Right ventricle myocardium superior (tissue), 1 donor: ENCODE measurements at regions of chr4 and their contacts with region 1.

Region 1: GRCh38 chr4:67545199-67546003 is at the start of gene CENPC:
- DNase-seq: peak; percentile 99
- ATAC-seq: peak; percentile 100
- total RNA-seq, gene CENPC: 6.9 TPM

Region 2: GRCh38 chr4:67437974-67438713 is 107.3 kb before region 1 on chr4:
- intact Hi-C with region 1: no loop called
- DNase-seq: no peak
- ATAC-seq: peak; percentile 85

Region 3: DNA sequence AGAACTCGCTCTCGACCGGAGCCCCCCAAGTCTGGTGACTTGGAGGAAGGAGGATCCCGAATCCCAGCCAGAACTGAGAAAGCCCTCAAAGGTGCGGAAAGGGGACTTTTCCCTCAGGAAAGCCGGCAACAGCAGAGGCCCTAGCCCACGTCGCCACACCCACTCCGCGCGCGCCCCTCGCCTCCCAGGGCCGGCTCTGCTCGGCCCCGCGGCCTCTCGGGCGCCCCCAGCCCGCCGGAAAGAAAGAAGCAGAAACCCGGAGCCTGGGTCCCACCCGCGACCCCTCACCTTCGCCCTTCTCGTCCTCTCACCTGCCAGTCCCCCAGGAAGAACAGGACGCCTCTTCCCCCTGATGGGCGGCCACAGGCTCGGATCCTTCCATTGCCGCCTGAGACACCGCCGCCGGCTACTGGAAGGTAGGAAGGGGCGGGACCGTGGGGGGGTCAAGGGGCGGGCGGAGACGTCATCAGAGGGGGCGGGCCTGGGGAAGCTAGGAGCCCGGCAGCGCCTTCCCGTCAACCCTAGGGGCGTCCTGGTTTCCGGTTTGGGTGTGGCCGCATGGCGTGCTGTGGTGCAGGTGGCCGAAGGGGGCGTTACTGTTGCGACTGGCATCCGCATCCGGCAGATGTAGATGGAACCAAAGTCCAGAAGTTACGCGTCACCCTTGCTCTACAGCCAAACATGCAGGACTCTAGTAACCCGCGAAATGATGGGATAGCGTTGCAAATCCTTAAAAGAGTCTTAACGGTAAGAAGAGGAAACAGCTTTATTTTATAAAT is 155.5 kb after region 1 on chr4 and contains the start of gene UBA6:
- intact Hi-C with region 1: loop called (anchors 10 kb)
- DNase-seq: peak; percentile 97
- ATAC-seq: peak; percentile 100
- total RNA-seq, gene UBA6: 20.5 TPM